ENCODE measurements at regions of chr21 and their contacts with region 1.

Region 1: DNA sequence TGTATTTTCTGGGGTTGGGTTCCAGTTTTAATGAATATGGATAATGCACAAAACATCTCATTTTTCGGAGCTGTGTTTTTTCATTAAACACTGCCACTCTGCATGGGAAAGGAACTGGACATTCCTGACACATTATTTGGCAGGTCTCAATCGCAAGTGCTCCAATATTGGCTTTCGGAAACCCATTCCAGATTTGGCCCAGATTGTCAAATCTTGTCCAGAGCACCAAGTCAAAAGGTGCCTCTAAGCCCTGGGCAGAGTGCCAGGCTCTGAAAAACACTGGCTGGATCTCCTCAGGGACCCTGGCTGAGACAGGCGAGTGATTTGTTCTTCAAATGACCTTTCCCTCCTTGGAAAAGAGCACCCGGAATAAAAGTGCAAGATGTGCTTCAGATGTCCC is 68.4 kb upstream of the MRPS6 start:
- DNase-seq: no peak
- H3K4me3 ChIP-seq: no peak overlapping the region
- H3K27ac ChIP-seq: no peak overlapping the region
- H3K4me1 ChIP-seq: peaks cover 2% of the 10 kb centered on the region
- H3K27me3 ChIP-seq: no peaks in the 10 kb centered on the region
- CTCF ChIP-seq: no peak
- EP300 ChIP-seq: no peak
- POLR2A ChIP-seq: no peak

Region 2: GRCh38 chr21:33931799-33932390 is 73.1 kb before region 1 on chr21:
- intact Hi-C with region 1: loop called in 1 of 4 experiments (anchors 10 kb)
- DNase-seq: no peak
- H3K4me3 ChIP-seq: peak overlapping the region; percentile 36
- H3K27ac ChIP-seq: no peak overlapping the region
- H3K4me1 ChIP-seq: peaks cover 4% of the 10 kb centered on the region
- H3K27me3 ChIP-seq: no peaks in the 10 kb centered on the region
- CTCF ChIP-seq: no peak
- EP300 ChIP-seq: no peak
- POLR2A ChIP-seq: no peak